Right cardiac atrium (tissue), 5 donors: ENCODE measurements at regions of chr1 and their contacts with region 1.

Region 1: DNA sequence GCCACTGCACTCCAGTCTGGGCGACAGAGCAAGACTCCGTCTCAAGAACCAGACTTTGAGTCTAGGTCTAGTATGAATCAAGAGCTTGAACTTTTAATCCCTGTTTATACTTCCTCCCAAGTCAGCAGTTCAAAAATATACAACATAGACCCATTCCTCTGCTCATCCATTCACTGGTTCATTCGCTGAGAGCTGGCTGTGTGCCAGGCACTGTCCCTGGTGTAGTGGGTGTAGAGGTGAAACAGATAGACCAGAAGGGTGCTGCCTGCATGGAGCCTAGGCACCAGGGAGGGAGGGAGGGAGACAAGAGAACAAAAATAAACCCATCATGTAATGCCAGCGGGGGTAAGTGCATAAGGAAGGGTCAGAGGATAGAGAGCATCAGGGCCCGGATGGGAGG is 25.5 kb upstream of the SEC16B start:
- DNase-seq: peak in 2 of 3 donors; percentile 33 to 53
- ATAC-seq: no peak
- H3K4me3 ChIP-seq: no peak overlapping the region
- H3K27ac ChIP-seq: no peak overlapping the region
- H3K4me1 ChIP-seq: no peaks in the 10 kb centered on the region
- H3K27me3 ChIP-seq: no peaks in the 10 kb centered on the region

Region 2: GRCh38 chr1:177969825-177970371 is 25.5 kb before region 1 on chr1 and contains the start of gene SEC16B:
- intact Hi-C with region 1: loop called in 1 of 4 experiments (anchors 2 kb)
- DNase-seq: no peak
- ATAC-seq: peak; percentile 16 to 18
- H3K4me3 ChIP-seq: no peak within 1 kb of the TSS
- H3K27ac ChIP-seq: no peak within 1 kb of the TSS
- H3K4me1 ChIP-seq: no peaks in the 10 kb centered on the region
- H3K27me3 ChIP-seq: no peaks in the 10 kb centered on the region
- total RNA-seq, gene SEC16B: 1.4 to 3.9 (median 2.6) TPM

Region 3: DNA sequence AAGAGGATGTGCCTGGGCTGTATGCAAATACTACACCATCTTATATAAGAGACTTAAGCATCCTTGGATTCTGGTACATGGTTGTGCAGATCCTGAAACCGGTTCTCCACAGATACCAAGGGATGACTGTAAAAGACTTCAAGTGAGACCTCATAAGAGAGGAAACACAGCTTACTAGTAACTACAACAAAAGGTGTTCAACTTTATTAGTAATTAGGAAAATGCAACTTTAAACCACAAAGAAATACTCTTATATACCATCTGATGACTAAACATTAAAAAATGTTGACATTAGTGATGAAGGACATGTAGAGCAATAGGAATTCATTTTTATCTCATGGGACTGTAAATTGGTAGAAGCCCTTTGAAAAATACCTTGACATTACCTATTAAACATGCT is 201.3 kb after region 1 on chr1:
- intact Hi-C with region 1: no loop called
- DNase-seq: no peak
- ATAC-seq: no peak
- H3K4me3 ChIP-seq: no peak overlapping the region
- H3K27ac ChIP-seq: no peak overlapping the region
- H3K4me1 ChIP-seq: peaks cover 1% of the 10 kb centered on the region
- H3K27me3 ChIP-seq: no peaks in the 10 kb centered on the region

Region 4: DNA sequence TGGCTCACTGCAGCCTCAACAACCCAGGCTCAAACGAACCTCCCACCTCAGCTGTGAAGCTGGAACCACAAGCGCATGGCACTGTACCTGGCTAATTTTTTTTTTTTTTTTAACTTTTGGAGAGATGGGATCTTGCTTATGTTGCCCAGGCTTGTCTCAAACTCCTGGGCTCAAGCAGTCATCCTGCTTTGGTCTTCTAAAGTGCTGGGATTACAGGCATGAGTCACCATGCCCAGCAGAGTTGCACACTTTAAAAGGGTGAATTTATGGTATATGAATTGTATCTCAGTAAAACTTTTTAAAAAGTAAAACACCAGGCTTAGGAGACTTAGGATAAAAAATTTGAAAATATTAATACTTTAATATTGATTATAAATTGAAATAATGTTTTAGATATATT is 402.3 kb after region 1 on chr1:
- intact Hi-C with region 1: no loop called
- DNase-seq: no peak
- ATAC-seq: no peak
- H3K4me3 ChIP-seq: no peak overlapping the region
- H3K27ac ChIP-seq: no peak overlapping the region
- H3K4me1 ChIP-seq: peaks cover 2% of the 10 kb centered on the region
- H3K27me3 ChIP-seq: no peaks in the 10 kb centered on the region